ENCODE measurements at regions of chr5 and their contacts with region 1.

Region 1: DNA sequence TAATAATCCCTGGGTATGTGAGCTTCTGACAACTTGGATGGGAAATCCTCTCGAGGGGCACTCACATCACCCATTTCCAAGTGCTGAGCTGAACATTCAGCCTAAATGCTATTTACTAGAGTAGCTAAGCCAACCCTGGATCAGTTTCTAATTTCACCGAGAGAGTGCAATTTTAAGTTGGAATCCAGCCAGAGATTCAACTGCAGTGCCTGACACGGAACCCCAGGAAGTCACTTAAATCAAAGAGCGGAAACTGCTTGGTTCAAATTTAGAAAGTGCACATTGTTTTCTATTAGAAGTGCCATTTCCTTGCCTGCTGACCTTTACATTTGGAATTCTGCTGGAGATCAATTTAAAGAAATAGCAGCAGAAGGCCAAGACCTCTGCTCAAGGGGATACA is 8.8 kb downstream of the SPRY4 start:
- DNase-seq: no peak
- ATAC-seq: peak; percentile 24
- H3K4me3 ChIP-seq: no peak overlapping the region
- H3K27ac ChIP-seq: no peak overlapping the region
- H3K4me1 ChIP-seq: peaks cover 0 to 23% of the 10 kb centered on the region in 2 donors
- H3K27me3 ChIP-seq: no peaks in the 10 kb centered on the region

Region 2: GRCh38 chr5:142151436-142152383 is 164.3 kb before region 1 on chr5:
- intact Hi-C with region 1: loop called in 1 of 2 experiments (anchors 5 kb)
- DNase-seq: peak in 1 of 2 donors; percentile 52
- ATAC-seq: peak; percentile 76
- H3K4me3 ChIP-seq: no peak overlapping the region
- H3K27ac ChIP-seq: no peak overlapping the region
- H3K4me1 ChIP-seq: no peaks in the 10 kb centered on the region
- H3K27me3 ChIP-seq: no peaks in the 10 kb centered on the region

Region 3: DNA sequence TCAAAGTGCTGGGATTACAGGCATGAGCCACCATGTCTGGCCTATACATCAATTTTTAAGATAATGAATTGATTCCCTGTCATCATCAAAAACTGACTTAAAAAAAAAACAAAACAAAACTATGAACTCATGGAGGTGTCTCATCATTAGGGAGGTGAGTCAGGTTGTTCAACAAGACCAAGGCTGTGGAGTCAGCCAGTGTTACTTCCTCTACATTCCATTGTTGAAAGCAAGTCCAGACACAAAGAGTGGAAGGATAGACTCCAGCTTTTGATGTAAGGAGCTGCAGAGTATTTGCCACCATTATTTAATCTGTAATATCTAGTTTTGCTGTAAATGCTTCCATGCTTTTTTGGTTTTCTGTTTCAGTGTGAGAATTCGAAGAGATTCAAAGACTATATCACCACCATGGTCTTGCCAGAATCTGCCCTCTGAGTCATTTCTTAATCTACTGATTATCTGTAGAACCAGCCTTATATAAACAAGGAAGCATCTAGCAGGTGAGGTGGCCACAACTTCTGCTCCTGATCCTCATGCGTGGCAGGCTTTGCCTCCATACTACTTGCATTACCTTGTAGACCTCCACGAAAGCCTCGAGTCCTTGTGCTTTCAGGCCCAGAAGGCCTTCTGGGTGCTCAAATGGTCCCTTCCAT is 213.7 kb after region 1 on chr5:
- intact Hi-C with region 1: no loop called
- DNase-seq: no peak
- ATAC-seq: no peak
- H3K4me3 ChIP-seq: no peak overlapping the region
- H3K27ac ChIP-seq: no peak overlapping the region
- H3K4me1 ChIP-seq: no peaks in the 10 kb centered on the region
- H3K27me3 ChIP-seq: no peaks in the 10 kb centered on the region

Measured in aorta (tissue), 5 donors.